HAP-1 (cell line): ENCODE measurements at regions of chr3 and their contacts with region 1.

Region 1: DNA sequence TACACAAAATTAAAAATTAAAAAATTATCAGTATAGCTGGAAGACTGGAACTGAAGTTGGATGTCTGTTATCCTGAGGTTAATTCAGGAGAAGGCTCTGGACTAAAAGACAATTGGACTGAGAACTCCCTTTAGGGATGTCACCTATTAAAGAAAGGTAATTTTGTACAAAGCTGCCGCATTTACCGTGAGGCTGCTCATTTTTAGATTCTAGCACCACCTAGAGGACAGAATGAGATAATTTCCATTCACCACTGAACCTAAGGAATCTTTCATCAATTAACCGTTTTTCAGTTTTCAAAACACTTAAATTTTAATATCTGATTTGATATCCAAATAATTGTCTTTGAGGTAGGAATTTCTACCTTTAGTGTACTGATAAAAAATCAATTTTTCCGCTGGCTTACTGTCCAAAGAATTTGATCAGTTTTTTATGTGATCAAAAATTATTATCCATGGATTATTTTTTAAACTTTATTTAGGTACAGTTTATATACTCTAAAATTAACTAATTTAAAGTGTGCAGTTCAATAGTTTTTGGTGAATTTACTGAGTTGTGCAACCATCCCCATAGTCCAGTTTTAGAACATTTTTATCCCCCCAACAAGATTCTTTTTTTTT is 106.7 kb upstream of the TNIK start:
- DNase-seq: peak in 1 of 2 experiments; percentile 39
- H3K4me3 ChIP-seq: no peak overlapping the region
- H3K4me1 ChIP-seq: no peaks in the 10 kb centered on the region
- H3K27me3 ChIP-seq: no peaks in the 10 kb centered on the region

Region 2: GRCh38 chr3:171049861-171050444 is 517.0 kb before region 1 on chr3:
- in situ Hi-C with region 1: loop called (anchors 25 kb)
- DNase-seq: peak; percentile 47 to 72
- H3K4me3 ChIP-seq: no peak overlapping the region
- H3K4me1 ChIP-seq: no peaks in the 10 kb centered on the region; the same call in 1 of the 2 replicates
- H3K27me3 ChIP-seq: no peaks in the 10 kb centered on the region; the same call in 1 of the 2 replicates

Region 3: DNA sequence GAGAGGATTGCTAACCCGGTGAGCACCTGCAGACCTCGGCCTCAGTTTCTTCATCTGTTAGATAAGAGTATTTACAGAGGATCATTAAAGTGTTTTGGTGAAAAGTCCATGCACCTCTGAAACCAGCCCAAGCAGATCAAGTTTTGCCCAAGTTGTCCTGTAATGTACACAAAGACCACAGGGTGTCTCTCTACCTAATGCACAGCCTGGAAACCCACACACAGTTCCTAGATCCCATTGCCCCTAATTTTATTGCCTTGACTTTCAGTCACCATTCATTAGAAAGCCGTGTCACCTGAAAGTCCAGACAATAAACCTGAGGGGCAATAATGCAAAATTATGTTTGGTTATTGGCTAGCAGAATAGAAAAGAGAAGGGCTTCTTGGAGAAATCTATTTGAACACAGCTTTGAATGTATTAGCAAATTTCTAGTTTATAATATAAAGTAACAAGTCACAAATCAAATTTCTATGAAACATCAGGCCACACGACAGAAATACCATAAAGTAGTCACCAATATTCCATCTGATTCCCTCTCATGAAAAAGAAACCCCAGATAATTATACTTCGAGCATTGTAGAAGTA is 379.1 kb before region 1 on chr3:
- in situ Hi-C with region 1: loop called (anchors 25 kb)
- DNase-seq: peak; percentile 43 to 66
- H3K4me3 ChIP-seq: no peak overlapping the region
- H3K4me1 ChIP-seq: peaks cover 10% of the 10 kb centered on the region
- H3K27me3 ChIP-seq: no peaks in the 10 kb centered on the region